ENCODE measurements at regions of chr7 and their contacts with region 1.

Region 1: GRCh38 chr7:32891800-32892520 is 400 bp upstream of the KBTBD2 start:
- DNase-seq: peak; percentile 96 to 98 (median 98)
- H3K4me3 ChIP-seq: peak overlapping the region; percentile 80 to 83
- H3K4me3 Mint-ChIP-seq: peak overlapping the region; percentile 92 to 97 (median 94)
- H3K27ac ChIP-seq: peak overlapping the region; percentile 99
- H3K27ac Mint-ChIP-seq: peak overlapping the region; percentile 95 to 100 (median 99)
- H3K4me1 ChIP-seq: peaks cover 46% of the 10 kb centered on the region
- H3K4me1 Mint-ChIP-seq: peaks cover 37 to 59% (median 47%) of the 10 kb centered on the region in 4 donors
- H3K27me3 ChIP-seq: no peaks in the 10 kb centered on the region
- H3K27me3 Mint-ChIP-seq: no peaks in the 10 kb centered on the region

Region 2: DNA sequence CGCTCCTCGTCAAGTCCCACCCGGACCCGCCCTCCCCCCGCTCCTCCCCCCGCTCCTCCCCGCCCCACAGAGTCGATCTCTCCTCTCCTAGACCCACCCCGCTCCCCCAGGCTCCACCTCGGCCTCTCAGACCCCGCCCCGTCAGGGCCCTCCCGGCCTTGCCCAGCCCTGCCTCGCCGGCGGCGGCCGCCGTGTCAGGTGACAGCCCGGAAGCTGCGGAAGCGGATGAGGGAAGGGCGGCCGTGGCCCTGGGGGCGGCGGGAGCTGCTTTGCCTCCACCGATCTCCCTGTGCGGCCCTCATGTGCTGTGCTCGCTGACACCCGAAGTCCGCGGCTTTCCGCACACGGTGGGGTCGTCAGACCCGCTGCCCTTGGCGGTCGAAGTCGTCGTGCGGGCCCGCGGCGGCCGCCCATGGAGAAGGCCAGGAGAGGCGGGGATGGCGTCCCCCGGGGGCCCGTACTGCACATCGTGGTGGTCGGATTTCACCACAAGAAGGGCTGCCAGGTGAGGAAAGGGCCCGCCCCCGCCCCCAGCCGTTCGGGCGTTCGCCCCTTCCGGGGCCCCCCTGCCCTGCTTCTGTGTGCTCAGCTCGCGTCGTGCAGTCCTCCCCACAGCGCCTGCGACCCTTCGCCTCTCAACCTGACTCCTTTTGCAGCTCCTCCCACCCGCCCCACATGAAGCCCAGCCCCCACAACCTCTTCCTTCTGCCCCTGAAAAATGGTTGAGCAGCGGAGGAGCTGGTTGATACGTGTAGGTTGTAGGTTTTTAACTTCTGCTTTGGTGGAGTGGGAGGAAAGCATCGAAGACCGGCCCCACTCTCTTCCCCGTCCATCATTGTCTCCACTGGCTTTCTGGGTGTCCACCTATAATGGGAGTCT is 396.4 kb before region 1 on chr7 and contains the start of gene AVL9:
- CTCF ChIA-PET with region 1: no interaction called
- POLR2A ChIA-PET with region 1: interaction called, 16 read pairs
- intact Hi-C with region 1: loop called (anchors 1 kb)
- DNase-seq: peak; percentile 98 to 99 (median 98)
- H3K4me3 ChIP-seq: peak within 1 kb of the TSS; percentile 76 to 77
- H3K4me3 Mint-ChIP-seq: peak within 1 kb of the TSS; percentile 88 to 99 (median 96)
- H3K27ac ChIP-seq: peak within 1 kb of the TSS; percentile 90
- H3K27ac Mint-ChIP-seq: peak within 1 kb of the TSS; percentile 90 to 99 (median 98)
- H3K4me1 ChIP-seq: peaks cover 51% of the 10 kb centered on the region
- H3K4me1 Mint-ChIP-seq: peaks cover 25 to 53% (median 35%) of the 10 kb centered on the region in 4 donors
- H3K27me3 ChIP-seq: no peaks in the 10 kb centered on the region
- H3K27me3 Mint-ChIP-seq: no peaks in the 10 kb centered on the region
- total RNA-seq, gene AVL9: 39.1 to 40.6 TPM

Region 3: GRCh38 chr7:32879460-32879859 is 12.5 kb before region 1 on chr7:
- CTCF ChIA-PET with region 1: interaction called, 4 read pairs
- POLR2A ChIA-PET with region 1: interaction called, 21 read pairs
- intact Hi-C with region 1: no loop called
- DNase-seq: no peak
- H3K4me3 ChIP-seq: no peak overlapping the region
- H3K4me3 Mint-ChIP-seq: peak overlapping the region in 4 of 8 donors; percentile 15 to 30 (median 28)
- H3K27ac ChIP-seq: no peak overlapping the region
- H3K27ac Mint-ChIP-seq: peak overlapping the region in 4 of 7 donors; percentile 1 to 46 (median 11)
- H3K4me1 ChIP-seq: peaks cover 52% of the 10 kb centered on the region
- H3K4me1 Mint-ChIP-seq: peaks cover 36 to 68% (median 55%) of the 10 kb centered on the region in 4 donors
- H3K27me3 ChIP-seq: no peaks in the 10 kb centered on the region
- H3K27me3 Mint-ChIP-seq: no peaks in the 10 kb centered on the region

Region 4: GRCh38 chr7:32942786-32943653 is 51.1 kb after region 1 on chr7:
- CTCF ChIA-PET with region 1: interaction called, 17 read pairs
- POLR2A ChIA-PET with region 1: interaction called, 59 read pairs
- intact Hi-C with region 1: loop called (anchors 1 kb)
- DNase-seq: peak; percentile 51 to 70 (median 63)
- H3K4me3 ChIP-seq: peak overlapping the region; percentile 8 to 62
- H3K4me3 Mint-ChIP-seq: peak overlapping the region; percentile 68 to 88 (median 76)
- H3K27ac ChIP-seq: peak overlapping the region; percentile 32
- H3K27ac Mint-ChIP-seq: peak overlapping the region in 3 of 7 donors; percentile 17 to 48 (median 35)
- H3K4me1 ChIP-seq: peaks cover 9% of the 10 kb centered on the region
- H3K4me1 Mint-ChIP-seq: peaks cover 5 to 11% (median 7%) of the 10 kb centered on the region in 4 donors
- H3K27me3 ChIP-seq: no peaks in the 10 kb centered on the region
- H3K27me3 Mint-ChIP-seq: peaks cover 2 to 5% of the 10 kb centered on the region in 2 donors

Region 5: DNA sequence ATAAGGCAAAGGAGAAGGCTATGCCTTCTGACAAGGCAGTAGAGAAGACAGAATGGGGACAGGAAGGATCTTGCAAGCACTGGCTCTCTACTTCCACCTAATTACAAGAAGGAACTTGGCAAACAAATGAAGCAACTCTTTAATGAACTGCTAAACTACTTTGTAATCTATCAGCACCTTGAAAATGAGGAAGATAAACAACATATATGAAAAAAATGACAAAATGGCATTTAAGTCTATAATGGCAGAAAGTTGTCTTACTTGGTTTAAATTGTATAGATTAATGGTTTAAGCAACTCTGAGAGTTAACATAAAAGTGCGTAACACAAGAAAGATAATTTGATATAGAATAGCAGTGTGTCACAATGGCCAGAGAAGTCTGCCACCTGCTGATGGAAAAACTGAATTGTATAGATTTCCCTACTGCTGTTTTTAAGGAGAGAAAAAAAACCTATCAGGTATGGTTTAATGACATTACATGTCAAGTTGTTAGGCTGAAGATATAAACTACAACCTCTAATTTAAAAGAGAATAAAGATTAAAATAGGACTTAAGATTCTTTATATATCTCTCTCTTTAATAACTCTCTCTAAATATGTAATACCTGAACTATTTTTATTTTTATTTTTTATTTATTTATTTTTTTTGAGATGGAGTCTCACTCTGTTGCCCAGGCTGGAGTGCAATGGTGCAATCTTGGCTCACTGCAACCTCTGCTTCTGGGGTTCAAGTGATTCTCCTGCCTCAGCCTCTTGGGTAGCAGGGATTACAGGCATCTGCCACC is 158.8 kb after region 1 on chr7:
- CTCF ChIA-PET with region 1: no interaction called
- POLR2A ChIA-PET with region 1: interaction called, 14 read pairs
- intact Hi-C with region 1: no loop called
- DNase-seq: peak; percentile 41 to 61 (median 55)
- H3K4me3 ChIP-seq: no peak overlapping the region
- H3K4me3 Mint-ChIP-seq: peak overlapping the region in 1 of 8 donors; percentile 1
- H3K27ac ChIP-seq: no peak overlapping the region
- H3K27ac Mint-ChIP-seq: peak overlapping the region in 4 of 7 donors; percentile 10 to 39 (median 29)
- H3K4me1 ChIP-seq: peaks cover 50% of the 10 kb centered on the region
- H3K4me1 Mint-ChIP-seq: peaks cover 28 to 70% (median 47%) of the 10 kb centered on the region in 4 donors
- H3K27me3 ChIP-seq: no peaks in the 10 kb centered on the region
- H3K27me3 Mint-ChIP-seq: no peaks in the 10 kb centered on the region

Region 6: GRCh38 chr7:33128990-33129805 is 237.2 kb after region 1 on chr7 and contains the start of gene BBS9:
- CTCF ChIA-PET with region 1: no interaction called
- POLR2A ChIA-PET with region 1: interaction called, 5 read pairs
- intact Hi-C with region 1: loop called (anchors 2 kb)
- DNase-seq: peak; percentile 89 to 93 (median 90)
- H3K4me3 ChIP-seq: peak within 1 kb of the TSS; percentile 74 to 81
- H3K4me3 Mint-ChIP-seq: peak within 1 kb of the TSS; percentile 96 to 98 (median 97)
- H3K27ac ChIP-seq: peak within 1 kb of the TSS; percentile 66
- H3K27ac Mint-ChIP-seq: peak within 1 kb of the TSS; percentile 88 to 97 (median 96)
- H3K4me1 ChIP-seq: peaks cover 15% of the 10 kb centered on the region
- H3K4me1 Mint-ChIP-seq: peaks cover 14 to 27% (median 15%) of the 10 kb centered on the region in 4 donors
- H3K27me3 ChIP-seq: no peaks in the 10 kb centered on the region
- H3K27me3 Mint-ChIP-seq: peaks cover 0 to 4% of the 10 kb centered on the region in 2 donors
- total RNA-seq, gene BBS9: 27.0 to 27.3 TPM

Region 7: DNA sequence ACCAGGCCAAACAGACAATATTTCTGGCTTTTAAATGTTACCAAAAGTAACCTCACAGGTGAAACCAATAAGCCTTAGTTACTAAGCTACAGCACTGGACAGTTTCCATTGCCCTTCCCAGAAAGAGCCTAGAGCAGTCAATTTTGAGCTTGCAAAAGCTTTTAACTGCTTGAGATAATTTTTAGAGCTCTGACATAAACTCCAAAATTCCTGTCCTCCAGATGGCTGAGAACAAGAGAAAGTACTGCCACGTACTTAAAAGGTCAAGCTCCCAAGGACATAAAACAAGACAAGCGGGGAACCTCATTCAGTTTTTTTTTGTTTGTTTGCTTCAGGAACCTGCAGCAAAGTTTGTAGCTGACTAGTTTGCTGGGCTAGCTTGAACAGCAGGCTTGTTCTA is 291.5 kb after region 1 on chr7:
- CTCF ChIA-PET with region 1: no interaction called
- POLR2A ChIA-PET with region 1: no interaction called
- intact Hi-C with region 1: no loop called
- DNase-seq: no peak
- H3K4me3 ChIP-seq: no peak overlapping the region
- H3K4me3 Mint-ChIP-seq: no peak overlapping the region
- H3K27ac ChIP-seq: no peak overlapping the region
- H3K27ac Mint-ChIP-seq: peak overlapping the region in 1 of 7 donors; percentile 13
- H3K4me1 ChIP-seq: no peaks in the 10 kb centered on the region
- H3K4me1 Mint-ChIP-seq: peaks cover 0 to 3% (median 2%) of the 10 kb centered on the region in 4 donors
- H3K27me3 ChIP-seq: no peaks in the 10 kb centered on the region
- H3K27me3 Mint-ChIP-seq: no peaks in the 10 kb centered on the region